ENCODE measurements at regions of chr2 and their contacts with region 1.

Region 1: GRCh38 chr2:55168221-55169154 is 63.6 kb downstream of the CLHC1 start:
- DNase-seq: peak in 1 of 2 donors; percentile 67
- ATAC-seq: peak; percentile 84
- H3K4me3 ChIP-seq: no peak overlapping the region
- H3K27ac ChIP-seq: peak overlapping the region; percentile 77 to 91
- H3K4me1 ChIP-seq: peaks cover 2 to 4% of the 10 kb centered on the region in 2 donors
- H3K27me3 ChIP-seq: no peaks in the 10 kb centered on the region

Region 2: GRCh38 chr2:55010149-55010591 is 158.3 kb before region 1 on chr2:
- intact Hi-C with region 1: loop called (anchors 2 to 10 kb)
- DNase-seq: peak in 1 of 2 donors; percentile 61
- ATAC-seq: peak; percentile 88
- H3K4me3 ChIP-seq: peak overlapping the region in 1 of 2 donors; percentile 59
- H3K27ac ChIP-seq: no peak overlapping the region
- H3K4me1 ChIP-seq: peaks cover 6 to 7% of the 10 kb centered on the region in 2 donors
- H3K27me3 ChIP-seq: no peaks in the 10 kb centered on the region

Measured in aorta (tissue), 5 donors.